ENCODE measurements at regions of chr16 and their contacts with region 1.

Region 1: GRCh38 chr16:7227229-7227721 is 105.4 kb upstream of the RBFOX1 start:
- DNase-seq: no peak
- H3K4me3 ChIP-seq: peak overlapping the region in 1 of 59 donors; percentile 9
- H3K27ac ChIP-seq: no peak overlapping the region
- H3K27me3 ChIP-seq: peaks cover 0 to 23% (median 0%) of the 10 kb centered on the region in 45 donors
- CTCF ChIP-seq: no peak

Region 2: GRCh38 chr16:7113949-7114348 is 113.3 kb before region 1 on chr16:
- intact Hi-C with region 1: no loop called
- DNase-seq: no peak
- H3K4me3 ChIP-seq: no peak overlapping the region
- H3K27ac ChIP-seq: no peak overlapping the region
- H3K27me3 ChIP-seq: peaks cover 0 to 32% (median 0%) of the 10 kb centered on the region in 45 donors
- CTCF ChIP-seq: no peak

Region 3: DNA sequence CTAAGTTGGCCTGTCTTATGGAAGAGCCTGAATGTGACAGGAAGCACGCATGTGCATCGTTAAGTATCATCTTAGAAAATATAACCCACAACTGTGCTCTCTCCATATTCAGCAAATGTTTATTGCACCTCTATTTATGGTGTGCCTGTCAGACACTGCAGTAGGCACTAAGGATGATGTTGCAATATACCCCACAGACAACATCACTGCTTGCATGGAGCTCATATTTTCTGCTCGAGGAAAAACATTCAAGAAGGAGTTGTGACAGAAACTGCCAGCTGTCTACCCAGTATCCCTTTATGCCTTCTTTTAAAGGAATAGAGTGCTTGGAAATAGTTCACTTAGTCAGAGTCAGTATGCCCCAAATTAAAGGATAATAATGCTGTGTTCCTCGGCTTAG is 27.0 kb before region 1 on chr16:
- intact Hi-C with region 1: loop called in 1 of 2 experiments (anchors 2 kb)
- DNase-seq: peak in 1 of 10 donors; percentile 9
- H3K4me3 ChIP-seq: no peak overlapping the region
- H3K27ac ChIP-seq: no peak overlapping the region
- H3K27me3 ChIP-seq: peaks cover 0 to 9% (median 0%) of the 10 kb centered on the region in 45 donors
- CTCF ChIP-seq: no peak

Region 4: GRCh38 chr16:7211781-7212180 is 15.5 kb before region 1 on chr16:
- intact Hi-C with region 1: no loop called
- DNase-seq: no peak
- H3K4me3 ChIP-seq: no peak overlapping the region
- H3K27ac ChIP-seq: no peak overlapping the region
- H3K27me3 ChIP-seq: no peaks in the 10 kb centered on the region
- CTCF ChIP-seq: no peak

Region 5: GRCh38 chr16:7363422-7364417 is 136.4 kb after region 1 on chr16:
- intact Hi-C with region 1: no loop called
- DNase-seq: peak in 1 of 10 donors; percentile 66
- H3K4me3 ChIP-seq: no peak overlapping the region
- H3K27ac ChIP-seq: peak overlapping the region in 1 of 59 donors; percentile 61
- H3K27me3 ChIP-seq: no peaks in the 10 kb centered on the region
- CTCF ChIP-seq: no peak